ENCODE measurements at regions of chr2 and their contacts with region 1.

Region 1: GRCh38 chr2:152047819-152048471 is 50.9 kb downstream of the CACNB4 start:
- DNase-seq: peak in 2 of 3 donors; percentile 22 to 26
- H3K4me3 ChIP-seq: no peak overlapping the region
- H3K4me3 Mint-ChIP-seq: no peak overlapping the region
- H3K27ac ChIP-seq: no peak overlapping the region
- H3K27ac Mint-ChIP-seq: peak overlapping the region in 4 of 7 donors; percentile 20 to 78 (median 58)
- H3K4me1 ChIP-seq: peaks cover 51 to 52% of the 10 kb centered on the region in 2 donors
- H3K4me1 Mint-ChIP-seq: peaks cover 56% of the 10 kb centered on the region
- H3K27me3 ChIP-seq: no peaks in the 10 kb centered on the region
- H3K27me3 Mint-ChIP-seq: peaks cover 0 to 3% (median 0%) of the 10 kb centered on the region in 3 donors
- CTCF ChIP-seq: peak; percentile 48

Region 2: DNA sequence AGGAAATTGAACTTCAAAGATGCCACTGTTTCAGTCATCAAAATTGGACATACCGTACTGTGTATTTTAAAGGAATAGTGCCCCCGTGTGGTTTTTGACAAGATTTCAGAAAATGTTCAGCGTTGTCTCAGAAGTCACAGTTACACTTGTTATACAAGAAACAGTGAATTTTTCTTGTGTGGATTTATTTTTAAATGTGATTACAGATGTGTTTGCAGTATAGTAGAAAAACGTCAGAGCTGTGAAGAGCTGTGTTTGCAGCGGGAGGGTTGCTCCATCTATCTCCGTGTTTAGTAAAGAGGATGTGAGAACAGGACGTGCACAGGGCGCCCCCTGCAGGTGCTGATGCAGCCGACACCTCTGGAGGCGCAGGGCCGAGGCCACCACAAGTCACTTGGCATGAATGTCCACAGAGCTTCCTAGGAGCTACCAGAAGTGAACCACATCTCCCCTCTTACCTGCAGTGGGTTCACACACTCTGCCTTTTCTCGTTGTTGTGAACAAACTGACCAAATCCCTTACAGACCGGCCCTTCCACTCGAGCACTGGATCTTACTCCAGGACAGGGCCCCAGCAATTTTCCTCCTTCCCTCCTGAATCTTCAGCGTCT is 22.2 kb before region 1 on chr2:
- intact Hi-C with region 1: no loop called
- DNase-seq: peak; percentile 75 to 81 (median 76)
- H3K4me3 ChIP-seq: peak overlapping the region; percentile 31 to 70 (median 53)
- H3K4me3 Mint-ChIP-seq: peak overlapping the region; percentile 78 to 92
- H3K27ac ChIP-seq: no peak overlapping the region
- H3K27ac Mint-ChIP-seq: peak overlapping the region in 5 of 7 donors; percentile 37 to 76 (median 62)
- H3K4me1 ChIP-seq: peaks cover 3 to 4% of the 10 kb centered on the region in 2 donors
- H3K4me1 Mint-ChIP-seq: peaks cover 10% of the 10 kb centered on the region
- H3K27me3 ChIP-seq: no peaks in the 10 kb centered on the region
- H3K27me3 Mint-ChIP-seq: peaks cover 0 to 10% (median 0%) of the 10 kb centered on the region in 3 donors
- CTCF ChIP-seq: peak; percentile 100

Region 3: DNA sequence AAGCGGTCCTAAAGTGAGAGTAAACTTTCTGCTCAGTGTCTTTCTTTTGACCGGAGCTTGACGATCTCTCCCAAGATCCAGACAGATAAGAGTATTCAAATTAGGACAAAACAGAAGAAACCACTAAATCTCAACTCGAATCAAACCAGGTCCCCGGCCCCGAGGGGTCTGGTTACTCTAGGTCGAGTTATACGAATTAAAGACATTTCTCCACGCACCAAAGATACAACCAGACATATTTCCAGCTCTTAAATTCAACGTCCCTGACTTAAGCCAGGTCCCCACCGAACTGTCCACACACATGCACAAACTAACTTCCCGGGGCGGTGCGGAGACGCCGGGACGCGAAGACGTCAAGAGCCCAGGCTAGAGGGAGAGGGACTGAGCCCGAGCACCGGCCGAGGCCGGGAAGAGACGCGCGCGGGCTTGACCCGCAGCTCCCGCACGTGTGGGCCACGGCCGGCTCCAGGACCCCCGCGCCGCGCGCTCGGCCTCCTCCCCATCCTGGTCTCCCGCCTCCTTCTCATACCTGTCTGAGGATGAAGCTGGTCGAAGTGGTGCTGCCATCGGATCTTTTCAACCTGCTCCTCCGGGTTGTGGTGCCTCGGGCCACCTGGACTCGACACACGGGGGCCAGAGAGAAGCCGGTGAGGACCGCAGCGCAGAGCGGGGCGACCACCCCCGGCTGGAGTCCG is 50.0 kb after region 1 on chr2:
- intact Hi-C with region 1: loop called in 1 of 2 experiments (anchors 5 kb)
- DNase-seq: peak in 2 of 3 donors; percentile 19 to 20
- H3K4me3 ChIP-seq: peak overlapping the region; percentile 40 to 83 (median 44)
- H3K4me3 Mint-ChIP-seq: peak overlapping the region; percentile 84 to 94
- H3K27ac ChIP-seq: no peak overlapping the region
- H3K27ac Mint-ChIP-seq: peak overlapping the region in 4 of 7 donors; percentile 4 to 84 (median 32)
- H3K4me1 ChIP-seq: peaks cover 20 to 22% of the 10 kb centered on the region in 2 donors
- H3K4me1 Mint-ChIP-seq: peaks cover 30% of the 10 kb centered on the region
- H3K27me3 ChIP-seq: peaks cover 22 to 41% of the 10 kb centered on the region in 2 donors
- H3K27me3 Mint-ChIP-seq: peaks cover 25 to 47% (median 36%) of the 10 kb centered on the region in 3 donors
- CTCF ChIP-seq: no peak

Measured in CD14-positive monocyte (primary cell).